ENCODE measurements at regions of chr2 and their contacts with region 1.

Region 1: DNA sequence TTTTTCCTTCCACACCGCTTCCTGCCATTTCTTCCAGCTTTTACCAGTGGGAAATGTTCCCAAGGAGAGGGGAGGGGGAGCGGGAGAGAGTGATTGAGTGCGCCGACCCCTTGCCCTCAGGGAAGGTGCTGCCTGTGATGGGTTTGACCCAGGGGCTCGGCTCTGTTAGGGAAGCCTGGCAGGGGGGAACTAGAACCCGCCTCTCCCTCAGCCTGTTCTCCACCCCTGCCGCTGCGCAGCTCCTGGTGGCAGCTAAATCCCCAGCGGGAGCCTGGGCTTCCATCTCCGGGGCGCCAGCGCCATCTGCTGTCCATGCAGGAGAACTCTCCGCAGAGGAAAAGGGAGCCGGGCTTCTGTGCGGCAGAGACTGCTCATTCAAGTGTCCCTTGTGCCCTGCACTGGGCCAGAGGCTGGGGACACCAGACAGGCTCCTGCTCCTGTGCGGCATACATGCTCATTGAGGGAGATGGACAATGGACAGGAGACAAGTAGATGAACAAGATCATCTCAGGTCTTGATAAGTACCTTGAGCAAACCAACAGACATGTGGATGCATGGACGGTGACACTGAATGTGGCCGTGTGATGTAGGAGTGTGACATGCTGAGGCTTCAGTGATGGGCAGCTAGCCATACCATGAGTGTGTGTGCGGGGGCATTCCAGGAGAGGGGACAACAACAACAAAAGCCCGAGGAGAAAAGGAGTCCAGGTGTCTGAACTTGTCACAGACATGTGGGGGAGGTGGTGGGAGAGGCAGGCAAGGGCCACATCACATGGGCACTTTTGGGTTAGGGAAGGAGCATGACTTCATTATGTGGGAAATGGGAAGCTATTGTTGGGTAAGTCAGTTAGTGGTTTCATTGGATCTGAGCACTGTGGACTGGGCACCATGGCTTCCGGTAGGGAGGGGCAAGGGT is 13.3 kb downstream of the CHPF start:
- DNase-seq: peak; percentile 88
- H3K4me3 Mint-ChIP-seq: no peak overlapping the region
- H3K27ac Mint-ChIP-seq: no peak overlapping the region
- H3K4me1 Mint-ChIP-seq: no peaks in the 10 kb centered on the region
- H3K27me3 Mint-ChIP-seq: peaks cover 70% of the 10 kb centered on the region

Region 2: GRCh38 chr2:219459460-219460311 is 70.6 kb before region 1 on chr2:
- CTCF ChIA-PET with region 1: interaction called, 23 read pairs
- DNase-seq: peak; percentile 49
- H3K4me3 Mint-ChIP-seq: no peak overlapping the region
- H3K27ac Mint-ChIP-seq: no peak overlapping the region
- H3K4me1 Mint-ChIP-seq: peaks cover 3% of the 10 kb centered on the region
- H3K27me3 Mint-ChIP-seq: peaks cover 8% of the 10 kb centered on the region

Region 3: GRCh38 chr2:219484343-219485200 is 45.7 kb before region 1 on chr2:
- CTCF ChIA-PET with region 1: interaction called, 66 read pairs
- DNase-seq: no peak
- H3K4me3 Mint-ChIP-seq: no peak overlapping the region
- H3K27ac Mint-ChIP-seq: no peak overlapping the region
- H3K4me1 Mint-ChIP-seq: peaks cover 2% of the 10 kb centered on the region
- H3K27me3 Mint-ChIP-seq: peaks cover 87% of the 10 kb centered on the region

Region 4: GRCh38 chr2:219509780-219510511 is 20.4 kb before region 1 on chr2:
- CTCF ChIA-PET with region 1: interaction called, 21 read pairs
- DNase-seq: peak; percentile 68
- H3K4me3 Mint-ChIP-seq: no peak overlapping the region
- H3K27ac Mint-ChIP-seq: no peak overlapping the region
- H3K4me1 Mint-ChIP-seq: peaks cover 13% of the 10 kb centered on the region
- H3K27me3 Mint-ChIP-seq: peaks cover 74% of the 10 kb centered on the region

Measured in activated naive CD4-positive, alpha-beta T cell treated with anti-CD3 and anti-CD28 coated beads, Interleukin-2, amount 10 ng/mL, durations not matched to agents 7 days and 5 days (primary cell).